PC-9 (cell line): ENCODE measurements at regions of chr3 and their contacts with region 1.

Region 1: DNA sequence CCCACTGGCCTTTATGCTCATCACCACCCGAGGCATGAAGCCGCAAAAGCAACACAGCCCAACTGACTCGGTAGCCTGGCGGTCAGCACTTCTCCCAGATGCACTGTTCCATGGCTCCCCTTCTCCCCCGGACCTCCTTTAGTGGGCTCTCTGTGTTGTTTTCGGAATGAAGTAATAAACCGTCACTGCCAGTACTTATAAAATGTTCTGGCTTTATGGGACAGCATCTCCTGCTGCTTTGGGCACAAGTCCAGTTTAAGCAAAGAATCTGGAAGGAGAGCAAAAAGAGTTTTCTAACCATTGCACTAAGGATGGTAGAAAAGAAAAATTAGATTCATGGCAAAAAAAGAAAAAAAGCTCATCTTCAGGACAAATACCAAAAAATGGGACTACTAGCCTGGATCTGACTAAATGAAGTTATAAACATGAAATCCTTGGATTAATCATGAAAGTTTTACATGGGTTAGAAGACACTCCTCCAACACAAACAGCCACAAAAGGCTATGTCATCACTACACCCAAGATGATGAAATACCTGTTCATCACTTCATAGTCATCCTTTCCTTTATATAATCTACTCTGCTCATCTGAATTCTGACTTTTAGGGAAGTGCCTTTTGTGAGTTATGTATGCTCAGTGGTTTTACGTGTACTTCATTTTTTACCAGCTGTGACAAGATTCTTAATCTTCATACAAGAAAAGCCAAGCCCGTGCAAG is 89.5 kb upstream of the UBE2E2 start:
- DNase-seq: peak in 1 of 2 experiments; percentile 65
- H3K4me3 ChIP-seq: no peak overlapping the region
- H3K27ac ChIP-seq: no peak overlapping the region
- H3K4me1 ChIP-seq: peaks cover 35% of the 10 kb centered on the region
- H3K27me3 ChIP-seq: peaks cover 59% of the 10 kb centered on the region
- CTCF ChIP-seq: no peak

Region 2: GRCh38 chr3:23017780-23018179 is 95.8 kb before region 1 on chr3:
- CTCF ChIA-PET with region 1: no interaction called
- POLR2A ChIA-PET with region 1: no interaction called
- intact Hi-C with region 1: loop called (anchors 1 kb)
- DNase-seq: peak; percentile 68 to 92
- H3K4me3 ChIP-seq: no peak overlapping the region
- H3K27ac ChIP-seq: no peak overlapping the region
- H3K4me1 ChIP-seq: peaks cover 42% of the 10 kb centered on the region
- H3K27me3 ChIP-seq: no peaks in the 10 kb centered on the region
- CTCF ChIP-seq: no peak

Region 3: DNA sequence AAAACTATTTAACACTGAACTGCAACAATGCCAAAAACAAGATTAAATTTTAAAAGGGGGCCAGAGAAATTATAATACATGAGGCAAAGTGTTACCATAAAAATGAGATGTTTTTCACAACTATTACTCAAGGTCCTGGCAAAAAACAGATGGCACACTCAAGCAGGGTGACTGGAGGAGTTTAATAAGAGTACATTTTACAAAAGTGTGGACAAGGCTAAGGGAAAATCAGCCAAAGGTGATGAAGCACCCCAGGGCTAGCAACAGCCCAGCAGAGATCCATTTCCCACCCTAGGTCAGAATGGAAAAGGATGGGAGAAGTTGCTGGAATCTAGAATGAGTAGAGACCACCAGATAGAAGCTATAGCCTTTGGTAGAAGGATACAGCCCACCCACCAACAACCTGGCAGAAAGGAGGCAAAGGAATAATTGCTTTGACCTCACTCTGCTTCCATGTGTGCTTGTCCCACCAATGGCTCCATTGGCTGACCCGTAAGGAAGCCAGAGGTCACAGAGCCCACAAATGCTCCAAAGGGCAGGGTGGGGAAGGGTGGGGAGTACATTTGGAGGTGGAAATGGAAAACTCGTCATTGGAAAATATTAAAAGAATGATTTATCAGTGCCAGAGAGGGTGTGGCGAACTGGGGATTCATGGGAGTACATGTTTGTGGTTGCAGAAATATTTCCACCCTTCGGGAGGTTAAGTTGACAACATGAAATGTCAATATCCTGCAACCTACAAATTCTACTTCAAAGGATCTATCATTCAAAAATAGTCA is 71.5 kb before region 1 on chr3:
- CTCF ChIA-PET with region 1: no interaction called
- POLR2A ChIA-PET with region 1: no interaction called
- intact Hi-C with region 1: loop called (anchors 1 kb)
- DNase-seq: peak; percentile 43 to 48
- H3K4me3 ChIP-seq: no peak overlapping the region
- H3K27ac ChIP-seq: no peak overlapping the region
- H3K4me1 ChIP-seq: peaks cover 13% of the 10 kb centered on the region; the same call in 1 of the 2 replicates
- H3K27me3 ChIP-seq: no peaks in the 10 kb centered on the region
- CTCF ChIP-seq: no peak

Region 4: DNA sequence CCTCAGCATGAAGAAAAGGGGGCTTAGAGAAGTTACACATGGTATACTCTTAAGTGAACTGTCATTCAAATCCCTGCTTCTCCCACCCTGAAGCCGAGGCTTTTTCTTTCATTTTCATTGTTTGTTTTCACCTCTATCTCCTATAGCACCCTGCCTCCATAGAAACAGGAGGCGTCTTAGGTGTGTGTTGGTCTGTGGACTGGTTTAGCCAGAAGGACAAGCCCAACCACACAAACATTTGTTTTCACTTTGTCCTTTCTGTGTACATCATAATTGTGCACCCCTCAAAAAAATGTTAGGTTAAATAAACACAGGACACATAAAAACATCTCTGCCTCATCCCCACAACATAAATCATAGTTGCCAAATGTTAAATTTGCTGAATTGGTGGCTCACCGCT is 16.2 kb after region 1 on chr3:
- CTCF ChIA-PET with region 1: no interaction called
- POLR2A ChIA-PET with region 1: no interaction called
- intact Hi-C with region 1: loop called (anchors 1 kb)
- DNase-seq: peak; percentile 73 to 89
- H3K4me3 ChIP-seq: peak overlapping the region; percentile 45; the same call in 1 of the 2 replicates
- H3K27ac ChIP-seq: peak overlapping the region; percentile 2; the same call in 1 of the 2 replicates
- H3K4me1 ChIP-seq: peaks cover 25% of the 10 kb centered on the region
- H3K27me3 ChIP-seq: peaks cover 24% of the 10 kb centered on the region; the same call in 1 of the 2 replicates
- CTCF ChIP-seq: no peak

Region 5: GRCh38 chr3:23202921-23203707 is 89.5 kb after region 1 on chr3 and contains the start of gene UBE2E2:
- CTCF ChIA-PET with region 1: no interaction called
- POLR2A ChIA-PET with region 1: no interaction called
- intact Hi-C with region 1: loop called (anchors 1 kb)
- DNase-seq: peak in 1 of 2 experiments; percentile 74
- H3K4me3 ChIP-seq: peak within 1 kb of the TSS; percentile 95
- H3K27ac ChIP-seq: 0 out of 2 replicates have a peak within 1 kb of the TSS, but pooled peaks have one; percentile 17
- H3K4me1 ChIP-seq: peaks cover 22% of the 10 kb centered on the region
- H3K27me3 ChIP-seq: peaks cover 8% of the 10 kb centered on the region; the same call in 1 of the 2 replicates
- CTCF ChIP-seq: no peak
- total RNA-seq, gene UBE2E2: 45.0 and 48.7 TPM in 2 replicates